HepG2 (cell line): ENCODE measurements at regions of chr7 and their contacts with region 1.

Region 1: GRCh38 chr7:29588900-29589696 is 25.5 kb downstream of the PRR15 start:
- DNase-seq: peak; percentile 43
- ATAC-seq: peak; percentile 85
- H3K4me3 ChIP-seq: peak overlapping the region in 1 of 3 experiments; percentile 41; a peak in 3 of 6 replicates
- H3K27ac ChIP-seq: no peak overlapping the region
- H3K4me1 ChIP-seq: peaks cover 22% of the 10 kb centered on the region
- H3K27me3 ChIP-seq: no peaks in the 10 kb centered on the region
- CTCF ChIP-seq: peak; percentile 77
- EP300 ChIP-seq: no peak
- POLR2A ChIP-seq: no peak
- RAD21 ChIP-seq: peak; percentile 35; the same call in 1 of the 2 replicates

Region 2: DNA sequence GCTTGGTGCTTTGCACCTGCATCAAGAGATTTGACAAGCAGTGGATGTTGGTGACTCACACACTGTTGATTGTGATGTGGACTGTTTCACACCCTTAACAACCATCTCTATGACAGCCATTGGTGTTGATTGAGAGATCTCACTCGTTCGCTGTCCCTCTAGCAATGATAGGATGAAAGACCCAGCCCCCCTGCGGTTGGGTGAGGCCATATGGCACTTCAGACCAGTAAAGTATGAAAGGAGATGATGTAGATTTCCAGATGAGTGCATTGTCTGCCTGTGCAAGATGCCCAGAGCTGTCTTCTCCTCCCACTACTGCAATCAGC is 164.2 kb before region 1 on chr7:
- CTCF ChIA-PET with region 1: no interaction called
- POLR2A ChIA-PET with region 1: no interaction called
- in situ Hi-C with region 1: no loop called
- intact Hi-C with region 1: loop called (anchors 5 kb)
- DNase-seq: no peak
- ATAC-seq: no peak
- H3K4me3 ChIP-seq: no peak overlapping the region
- H3K27ac ChIP-seq: no peak overlapping the region
- H3K4me1 ChIP-seq: 0 out of 2 replicates have a peak, but pooled peaks cover 6% of the 10 kb centered on the region
- H3K27me3 ChIP-seq: no peaks in the 10 kb centered on the region
- CTCF ChIP-seq: no peak
- EP300 ChIP-seq: no peak
- POLR2A ChIP-seq: no peak
- RAD21 ChIP-seq: no peak

Region 3: DNA sequence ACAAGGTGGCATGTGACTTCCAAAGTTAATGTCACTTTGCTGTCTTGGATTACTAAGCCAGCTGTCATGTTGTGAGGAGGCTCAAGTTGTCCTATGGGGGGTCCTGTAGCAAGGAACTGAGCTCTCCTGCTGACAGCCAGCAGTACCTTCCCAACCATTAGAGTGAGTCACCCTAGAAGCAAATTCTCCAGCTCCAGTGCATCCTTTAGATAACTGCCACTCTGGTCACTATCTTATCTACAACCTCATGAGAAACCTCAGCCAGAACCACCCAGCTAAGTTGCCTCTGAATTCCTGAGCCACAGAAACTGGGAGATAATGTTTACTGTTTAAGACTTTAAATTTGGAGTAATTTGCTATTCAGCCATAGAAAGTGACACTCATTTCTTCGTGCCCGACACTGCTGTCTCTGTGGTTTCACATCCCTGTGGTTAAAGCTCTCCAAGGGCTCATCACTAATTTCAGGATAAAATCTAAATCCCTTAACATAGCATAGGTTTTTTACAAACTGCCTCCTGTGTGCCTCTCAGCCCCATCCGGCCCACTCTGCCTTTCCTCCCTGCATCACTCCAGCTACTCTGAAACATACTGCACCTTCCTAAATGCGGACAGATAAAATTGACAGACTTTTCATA is 58.0 kb after region 1 on chr7:
- CTCF ChIA-PET with region 1: no interaction called
- POLR2A ChIA-PET with region 1: no interaction called
- in situ Hi-C with region 1: no loop called
- intact Hi-C with region 1: no loop called
- DNase-seq: no peak
- ATAC-seq: no peak
- H3K4me3 ChIP-seq: no peak overlapping the region
- H3K27ac ChIP-seq: no peak overlapping the region
- H3K4me1 ChIP-seq: no peaks in the 10 kb centered on the region
- H3K27me3 ChIP-seq: no peaks in the 10 kb centered on the region
- CTCF ChIP-seq: no peak
- EP300 ChIP-seq: no peak
- POLR2A ChIP-seq: no peak
- RAD21 ChIP-seq: no peak